ENCODE measurements at regions of chr15 and their contacts with region 1.

Region 1: GRCh38 chr15:33132722-33133345 is 61.7 kb downstream of the FMN1 start:
- DNase-seq: peak; percentile 31
- ATAC-seq: peak; percentile 75
- H3K4me3 ChIP-seq: no peak overlapping the region
- H3K27ac ChIP-seq: no peak overlapping the region
- H3K4me1 ChIP-seq: no peaks in the 10 kb centered on the region
- H3K27me3 ChIP-seq: no peaks in the 10 kb centered on the region
- CTCF ChIP-seq: peak; percentile 68
- EP300 ChIP-seq: no peak
- POLR2A ChIP-seq: no peak
- RAD21 ChIP-seq: peak; percentile 52; the same call in 1 of the 2 replicates

Region 2: DNA sequence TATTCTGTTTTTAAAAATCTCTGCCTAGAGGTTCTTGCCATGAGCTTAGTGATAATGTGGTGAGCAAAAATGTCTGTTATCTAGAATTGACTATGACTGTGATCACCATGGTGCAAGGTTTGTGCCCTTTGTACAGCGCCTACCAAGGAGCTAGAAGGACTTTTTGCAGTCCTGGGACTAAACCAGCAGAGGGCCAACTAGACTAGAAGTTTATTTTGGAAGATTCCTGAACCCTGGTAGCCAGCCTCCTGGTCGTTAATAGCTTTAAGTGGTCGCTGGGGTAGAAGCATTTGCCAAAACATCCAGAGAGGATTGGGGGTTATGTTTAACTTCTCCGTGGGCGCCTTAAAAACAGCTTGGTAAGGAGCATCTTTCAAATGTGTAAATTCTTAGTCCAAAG is 483.5 kb before region 1 on chr15:
- CTCF ChIA-PET with region 1: interaction called, 3 read pairs
- POLR2A ChIA-PET with region 1: no interaction called
- in situ Hi-C with region 1: no loop called
- intact Hi-C with region 1: loop called (anchors 5 kb)
- DNase-seq: peak; percentile 63
- ATAC-seq: peak; percentile 90
- H3K4me3 ChIP-seq: no peak overlapping the region
- H3K27ac ChIP-seq: no peak overlapping the region
- H3K4me1 ChIP-seq: peaks cover 9% of the 10 kb centered on the region
- H3K27me3 ChIP-seq: no peaks in the 10 kb centered on the region; a peak in 1 of 5 replicates
- CTCF ChIP-seq: peak; percentile 53
- EP300 ChIP-seq: no peak
- POLR2A ChIP-seq: no peak
- RAD21 ChIP-seq: no peak

Region 3: DNA sequence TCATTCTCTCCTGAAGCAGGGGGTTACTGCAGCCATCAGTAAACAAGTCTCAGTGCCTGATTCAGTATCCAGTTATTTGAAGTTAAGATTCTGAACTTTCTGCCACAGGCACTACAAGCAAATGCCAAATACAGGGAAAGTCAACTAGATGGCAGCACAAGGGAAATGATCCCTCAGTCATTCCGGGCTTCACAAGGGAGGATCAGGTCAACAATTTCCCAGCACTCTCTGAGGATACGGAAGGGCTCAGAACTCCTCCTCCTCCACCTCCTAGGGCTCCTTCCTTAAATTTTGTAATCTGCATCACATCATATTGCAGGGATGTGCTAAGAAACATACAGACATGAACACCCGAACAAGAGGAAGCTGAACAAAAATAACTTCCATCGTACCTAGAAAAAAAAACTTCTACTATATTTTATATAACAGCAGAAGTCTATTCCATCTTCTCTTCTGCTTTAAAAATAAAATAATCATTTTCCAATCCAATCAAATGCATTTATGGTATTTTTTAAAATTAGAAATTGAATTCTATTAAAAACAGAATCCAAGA is 125.5 kb before region 1 on chr15:
- CTCF ChIA-PET with region 1: no interaction called
- POLR2A ChIA-PET with region 1: no interaction called
- in situ Hi-C with region 1: no loop called
- intact Hi-C with region 1: loop called (anchors 5 kb)
- DNase-seq: no peak
- ATAC-seq: no peak
- H3K4me3 ChIP-seq: no peak overlapping the region
- H3K27ac ChIP-seq: no peak overlapping the region
- H3K4me1 ChIP-seq: no peaks in the 10 kb centered on the region
- H3K27me3 ChIP-seq: no peaks in the 10 kb centered on the region
- CTCF ChIP-seq: no peak
- EP300 ChIP-seq: no peak
- POLR2A ChIP-seq: no peak
- RAD21 ChIP-seq: no peak

Region 4: DNA sequence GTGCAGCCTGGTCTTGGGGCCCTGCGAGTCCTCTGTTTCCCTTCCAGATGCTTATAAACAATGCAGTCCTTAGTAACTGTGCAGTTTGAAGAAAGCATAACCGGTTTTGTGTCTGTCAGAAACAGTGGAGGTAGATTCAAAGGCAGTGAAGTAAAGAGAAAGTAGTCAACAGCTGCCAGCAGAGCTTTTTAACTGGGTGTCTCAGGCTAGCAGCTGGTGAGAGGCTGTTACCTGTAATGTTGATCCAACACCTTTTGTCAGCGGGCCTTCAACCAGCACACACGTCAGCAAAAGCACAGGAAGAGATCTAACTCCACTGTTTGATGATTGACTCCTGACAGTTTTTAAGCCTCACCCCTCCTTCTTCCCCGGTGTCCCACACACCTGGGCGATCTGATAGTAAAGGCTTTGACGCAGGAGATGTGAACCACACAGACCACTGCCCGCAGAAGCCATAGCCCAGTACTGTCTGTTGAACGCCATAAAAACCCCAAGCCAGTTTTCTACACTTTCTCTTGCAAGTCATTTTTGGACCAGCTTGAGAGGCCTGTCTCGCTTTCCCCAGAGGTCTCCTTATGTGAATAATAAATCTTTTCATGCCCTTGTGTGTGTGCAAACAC is 116.3 kb before region 1 on chr15:
- CTCF ChIA-PET with region 1: interaction called, 30 read pairs
- POLR2A ChIA-PET with region 1: no interaction called
- in situ Hi-C with region 1: loop called (anchors 5 kb)
- intact Hi-C with region 1: no loop called
- DNase-seq: no peak
- ATAC-seq: no peak
- H3K4me3 ChIP-seq: no peak overlapping the region
- H3K27ac ChIP-seq: no peak overlapping the region
- H3K4me1 ChIP-seq: no peaks in the 10 kb centered on the region
- H3K27me3 ChIP-seq: no peaks in the 10 kb centered on the region
- CTCF ChIP-seq: no peak
- EP300 ChIP-seq: no peak
- POLR2A ChIP-seq: no peak
- RAD21 ChIP-seq: no peak

Region 5: DNA sequence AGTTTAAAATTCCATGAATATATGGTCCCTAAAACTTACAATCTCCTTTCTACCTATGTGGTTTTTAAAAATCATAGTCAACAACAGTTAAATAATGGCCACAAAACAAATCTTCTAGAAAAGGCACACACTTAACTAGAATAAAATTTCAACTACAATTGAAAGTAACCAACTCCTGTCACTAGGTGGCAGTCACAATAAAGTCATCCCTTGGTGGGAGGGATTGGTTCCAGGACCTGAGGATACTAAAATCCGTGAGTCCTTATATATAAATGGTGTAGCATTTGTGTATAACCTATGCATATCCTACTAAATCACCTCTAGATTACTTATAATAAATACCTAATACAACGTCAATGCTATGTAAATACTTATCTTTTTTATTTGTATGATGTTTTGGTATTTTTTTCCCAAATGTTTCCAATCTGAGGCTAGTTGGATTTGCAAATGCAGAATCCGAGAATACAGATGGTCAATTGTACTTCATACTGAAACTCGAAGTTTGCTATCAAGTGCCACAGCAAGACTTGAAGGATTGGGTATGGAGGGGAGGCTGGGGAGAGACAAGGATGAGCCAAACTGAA is 110.9 kb before region 1 on chr15:
- CTCF ChIA-PET with region 1: interaction called, 30 read pairs
- POLR2A ChIA-PET with region 1: no interaction called
- in situ Hi-C with region 1: loop called (anchors 5 kb)
- intact Hi-C with region 1: no loop called
- DNase-seq: peak; percentile 22
- ATAC-seq: peak; percentile 57; the same call in 2 of the 3 replicates
- H3K4me3 ChIP-seq: no peak overlapping the region
- H3K27ac ChIP-seq: no peak overlapping the region
- H3K4me1 ChIP-seq: no peaks in the 10 kb centered on the region
- H3K27me3 ChIP-seq: no peaks in the 10 kb centered on the region
- CTCF ChIP-seq: peak; percentile 65
- EP300 ChIP-seq: no peak
- POLR2A ChIP-seq: no peak
- RAD21 ChIP-seq: no peak

Region 6: GRCh38 chr15:33086507-33087121 is 46.2 kb before region 1 on chr15:
- CTCF ChIA-PET with region 1: interaction called, 7 read pairs
- POLR2A ChIA-PET with region 1: no interaction called
- in situ Hi-C with region 1: no loop called
- intact Hi-C with region 1: loop called (anchors 1 kb)
- DNase-seq: peak; percentile 19
- ATAC-seq: no peak
- H3K4me3 ChIP-seq: no peak overlapping the region
- H3K27ac ChIP-seq: no peak overlapping the region
- H3K4me1 ChIP-seq: no peaks in the 10 kb centered on the region
- H3K27me3 ChIP-seq: peaks cover 0 to under 1% of the 10 kb centered on the region in 2 experiments; a peak in 1 of 5 replicates
- CTCF ChIP-seq: peak; percentile 62
- EP300 ChIP-seq: no peak
- POLR2A ChIP-seq: no peak
- RAD21 ChIP-seq: no peak

Region 7: DNA sequence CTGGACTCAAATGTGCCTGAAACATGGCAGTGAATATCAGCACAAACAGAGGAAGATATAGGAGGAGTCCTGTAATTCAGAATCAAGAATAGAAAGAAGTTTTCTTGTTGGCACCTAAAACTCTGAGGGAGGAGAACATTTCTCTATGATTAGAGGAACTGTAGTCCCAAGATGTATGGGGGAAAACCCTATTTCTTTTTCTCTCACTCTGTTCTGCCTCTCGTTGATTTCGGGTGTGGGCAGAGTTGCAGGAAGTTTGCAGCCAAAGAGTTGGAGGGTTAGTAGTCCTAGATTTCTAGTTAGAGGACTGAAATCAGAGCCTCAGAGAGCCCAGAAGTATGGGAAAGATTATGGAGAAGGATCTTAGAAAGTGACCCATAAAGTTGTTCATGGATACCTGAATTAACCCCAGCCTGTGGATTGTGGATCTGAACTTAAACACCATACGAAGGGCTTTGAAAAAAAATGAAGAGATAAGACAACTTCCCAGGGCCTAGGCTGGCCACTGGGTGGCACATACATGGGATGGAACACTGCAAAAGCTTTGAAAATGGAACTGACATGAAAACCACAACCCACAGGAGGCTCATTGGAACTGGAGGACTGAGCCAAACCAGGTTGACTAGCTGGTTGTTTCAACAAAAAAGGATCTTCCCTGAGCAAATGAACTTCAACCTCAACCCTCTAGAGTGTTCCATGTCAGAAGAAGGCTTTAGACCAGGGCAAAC is 27.1 kb after region 1 on chr15:
- CTCF ChIA-PET with region 1: no interaction called
- POLR2A ChIA-PET with region 1: no interaction called
- in situ Hi-C with region 1: no loop called
- intact Hi-C with region 1: no loop called
- DNase-seq: no peak
- ATAC-seq: peak; percentile 35; the same call in 1 of the 3 replicates
- H3K4me3 ChIP-seq: no peak overlapping the region
- H3K27ac ChIP-seq: no peak overlapping the region
- H3K4me1 ChIP-seq: no peaks in the 10 kb centered on the region
- H3K27me3 ChIP-seq: no peaks in the 10 kb centered on the region
- CTCF ChIP-seq: no peak
- EP300 ChIP-seq: no peak
- POLR2A ChIP-seq: no peak
- RAD21 ChIP-seq: no peak

Measured in HepG2 (cell line).